ENCODE measurements at regions of chr3 and their contacts with region 1.

Region 1: GRCh38 chr3:51941798-51942602 is at the starts of genes PARP3 and RRP9:
- DNase-seq: peak; percentile 99 to 100 (median 100)
- H3K4me3 ChIP-seq: peak within 1 kb of the TSS; percentile 59 to 100 (median 84)
- H3K27ac ChIP-seq: peak within 1 kb of the TSS; percentile 80 to 99 (median 96)
- H3K27me3 ChIP-seq: no peaks in the 10 kb centered on the region
- CTCF ChIP-seq: peak; percentile 96 to 100 (median 100)
- total RNA-seq, gene PARP3: 12.4 to 30.0 (median 19.8) TPM
- total RNA-seq, gene RRP9: 7.7 to 17.5 (median 12.5) TPM

Region 2: DNA sequence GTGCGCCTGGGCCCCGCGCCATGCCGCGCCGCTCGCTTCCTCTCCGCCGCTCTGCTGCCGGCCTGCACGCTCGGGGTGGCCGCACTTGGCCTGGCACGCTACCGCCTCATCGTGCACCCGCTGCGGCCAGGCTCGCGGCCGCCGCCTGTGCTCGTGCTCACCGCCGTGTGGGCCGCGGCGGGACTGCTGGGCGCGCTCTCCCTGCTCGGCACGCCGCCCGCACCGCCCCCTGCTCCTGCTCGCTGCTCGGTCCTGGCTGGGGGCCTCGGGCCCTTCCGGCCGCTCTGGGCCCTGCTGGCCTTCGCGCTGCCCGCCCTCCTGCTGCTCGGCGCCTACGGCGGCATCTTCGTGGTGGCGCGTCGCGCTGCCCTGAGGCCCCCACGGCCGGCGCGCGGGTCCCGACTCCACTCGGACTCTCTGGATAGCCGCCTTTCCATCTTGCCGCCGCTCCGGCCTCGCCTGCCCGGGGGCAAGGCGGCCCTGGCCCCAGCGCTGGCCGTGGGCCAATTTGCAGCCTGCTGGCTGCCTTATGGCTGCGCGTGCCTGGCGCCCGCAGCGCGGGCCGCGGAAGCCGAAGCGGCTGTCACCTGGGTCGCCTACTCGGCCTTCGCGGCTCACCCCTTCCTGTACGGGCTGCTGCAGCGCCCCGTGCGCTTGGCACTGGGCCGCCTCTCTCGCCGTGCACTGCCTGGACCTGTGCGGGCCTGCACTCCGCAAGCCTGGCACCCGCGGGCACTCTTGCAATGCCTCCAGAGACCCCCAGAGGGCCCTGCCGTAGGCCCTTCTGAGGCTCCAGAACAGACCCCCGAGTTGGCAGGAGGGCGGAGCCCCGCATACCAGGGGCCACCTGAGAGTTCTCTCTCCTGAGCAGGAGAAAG is 14.1 kb after region 1 on chr3:
- intact Hi-C with region 1: loop called in 1 of 2 experiments (anchors 1 kb)
- DNase-seq: peak in 5 of 10 donors; percentile 56 to 73 (median 63)
- H3K4me3 ChIP-seq: peak overlapping the region; percentile 11 to 82 (median 64)
- H3K27ac ChIP-seq: peak overlapping the region; percentile 76 to 100 (median 98)
- H3K27me3 ChIP-seq: no peaks in the 10 kb centered on the region
- CTCF ChIP-seq: peak in 47 of 56 donors; percentile 7 to 63 (median 47)

Region 3: GRCh38 chr3:51974963-51975851 is 33.2 kb after region 1 on chr3 and contains the start of gene ABHD14A:
- intact Hi-C with region 1: loop called (anchors 1 kb)
- DNase-seq: peak in 9 of 10 donors; percentile 61 to 87 (median 73)
- H3K4me3 ChIP-seq: peak within 1 kb of the TSS; percentile 49 to 91 (median 79)
- H3K27ac ChIP-seq: peak within 1 kb of the TSS; percentile 78 to 100 (median 96)
- H3K27me3 ChIP-seq: no peaks in the 10 kb centered on the region
- CTCF ChIP-seq: peak in 34 of 56 donors; percentile 10 to 52 (median 26)
- total RNA-seq, gene ABHD14A: 31.4 to 85.8 (median 60.7) TPM

Region 4: DNA sequence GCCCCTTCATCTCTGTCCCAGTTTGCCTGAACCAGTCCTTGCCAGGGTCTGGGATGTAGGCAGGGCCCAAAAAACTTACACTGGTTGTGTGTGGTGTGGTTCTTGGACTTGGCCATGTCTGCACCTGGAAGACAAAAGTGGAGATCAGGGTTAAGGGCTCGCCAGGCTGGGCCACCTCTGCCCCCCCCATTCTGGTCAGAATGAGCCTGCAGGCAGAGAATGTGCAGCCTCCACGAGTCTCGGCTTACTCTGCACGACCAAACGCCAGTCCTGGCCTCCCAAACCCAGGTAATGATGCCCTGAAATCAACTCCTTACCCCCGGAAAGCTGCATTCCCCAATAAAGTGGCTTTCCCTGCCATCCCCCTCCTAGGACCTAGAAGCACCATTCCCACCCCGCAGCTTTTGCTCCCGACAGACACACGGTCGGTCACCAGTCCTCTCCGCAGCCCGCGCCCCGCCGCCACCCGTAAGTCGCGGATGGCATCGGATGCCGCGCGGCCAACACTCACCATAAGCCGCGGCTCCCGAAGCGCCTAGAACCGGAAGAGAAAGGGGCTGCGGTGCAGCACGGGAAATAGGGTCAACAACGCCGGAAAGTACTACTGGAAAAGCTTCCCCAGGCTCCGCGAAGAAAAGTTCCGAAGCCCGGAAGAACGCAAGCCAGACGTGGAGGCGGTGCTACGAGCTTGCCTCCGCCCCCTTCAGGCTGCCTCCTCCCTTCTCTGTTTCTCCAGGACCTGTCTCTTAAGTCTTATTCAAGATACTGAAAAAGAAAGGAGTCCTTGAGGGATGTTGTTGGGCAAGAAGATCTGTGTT is 53.6 kb after region 1 on chr3 and contains the start of gene RPL29:
- intact Hi-C with region 1: loop called (anchors 1 to 2 kb)
- DNase-seq: peak; percentile 75 to 92 (median 89)
- H3K4me3 ChIP-seq: peak within 1 kb of the TSS; percentile 52 to 96 (median 78)
- H3K27ac ChIP-seq: peak within 1 kb of the TSS in 58 of 59 donors; percentile 48 to 96 (median 90)
- H3K27me3 ChIP-seq: no peaks in the 10 kb centered on the region
- CTCF ChIP-seq: peak; percentile 41 to 85 (median 71)
- total RNA-seq, gene RPL29: 154 to 416 (median 290) TPM

Region 5: GRCh38 chr3:52056968-52057805 is 115.2 kb after region 1 on chr3:
- intact Hi-C with region 1: loop called in 1 of 2 experiments (anchors 10 kb)
- DNase-seq: peak; percentile 100
- H3K4me3 ChIP-seq: peak overlapping the region; percentile 42 to 96 (median 68)
- H3K27ac ChIP-seq: peak overlapping the region; percentile 50 to 99 (median 93)
- H3K27me3 ChIP-seq: no peaks in the 10 kb centered on the region
- CTCF ChIP-seq: peak in 22 of 56 donors; percentile 3 to 40 (median 19)

Region 6: GRCh38 chr3:52144034-52144795 is 202.2 kb after region 1 on chr3:
- intact Hi-C with region 1: loop called (anchors 5 kb)
- DNase-seq: peak; percentile 82 to 93 (median 86)
- H3K4me3 ChIP-seq: no peak overlapping the region
- H3K27ac ChIP-seq: peak overlapping the region in 37 of 59 donors; percentile 7 to 91 (median 60)
- H3K27me3 ChIP-seq: no peaks in the 10 kb centered on the region
- CTCF ChIP-seq: peak; percentile 90 to 100 (median 99)